Activated B cell treated with CpG ODN at 0.5 μM for 24 hours (primary cell): ENCODE measurements at regions of chr12 and their contacts with region 1.

Region 1: DNA sequence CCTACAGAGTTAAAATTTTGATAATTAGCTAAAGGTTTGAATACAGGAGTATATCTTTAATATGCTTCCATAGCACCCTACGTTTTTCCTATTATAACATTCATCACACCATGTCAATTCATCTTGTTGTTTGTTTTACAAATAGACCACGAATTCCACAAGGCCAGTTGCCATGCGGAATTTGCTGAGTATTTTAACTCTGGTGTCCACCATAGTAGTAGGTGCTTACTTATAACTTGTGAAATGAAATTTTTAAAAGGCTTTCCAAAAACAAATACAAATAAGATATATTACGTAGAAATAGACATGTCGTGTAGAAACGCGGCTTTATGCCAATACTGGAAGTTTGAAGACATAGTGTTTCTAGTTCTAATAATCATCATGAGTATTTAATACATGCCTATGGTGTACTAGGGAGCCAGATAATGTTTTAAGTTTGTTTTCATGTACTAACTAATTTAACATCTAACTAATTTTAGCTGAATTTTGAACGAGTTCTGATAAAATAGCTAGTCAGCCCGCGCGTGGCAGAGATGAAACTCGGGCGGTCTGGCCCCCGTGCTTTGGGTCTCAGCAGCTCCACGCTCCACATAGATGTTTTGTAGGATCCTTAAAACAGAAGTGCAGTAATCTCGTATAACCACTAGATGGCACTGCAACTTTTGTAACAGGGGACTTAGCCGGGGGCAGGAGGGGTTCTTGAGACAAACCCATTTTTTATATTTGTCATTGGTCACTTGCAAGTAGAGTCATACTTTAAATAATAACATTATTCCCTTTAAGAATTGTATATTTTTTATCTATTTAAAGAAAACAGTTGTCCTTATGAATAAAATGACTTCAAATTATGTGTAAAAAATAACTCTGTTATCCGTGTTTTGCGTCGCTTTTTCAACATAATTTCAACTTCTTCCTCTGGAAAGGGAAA is 10.2 kb downstream of the CD69 start:
- DNase-seq: no peak
- ATAC-seq: peak; percentile 85
- H3K4me3 Mint-ChIP-seq: no peak overlapping the region
- H3K27ac Mint-ChIP-seq: peak overlapping the region; percentile 57
- H3K4me1 Mint-ChIP-seq: peaks cover 35% of the 10 kb centered on the region
- H3K27me3 Mint-ChIP-seq: no peaks in the 10 kb centered on the region
- CTCF ChIP-seq: no peak

Region 2: DNA sequence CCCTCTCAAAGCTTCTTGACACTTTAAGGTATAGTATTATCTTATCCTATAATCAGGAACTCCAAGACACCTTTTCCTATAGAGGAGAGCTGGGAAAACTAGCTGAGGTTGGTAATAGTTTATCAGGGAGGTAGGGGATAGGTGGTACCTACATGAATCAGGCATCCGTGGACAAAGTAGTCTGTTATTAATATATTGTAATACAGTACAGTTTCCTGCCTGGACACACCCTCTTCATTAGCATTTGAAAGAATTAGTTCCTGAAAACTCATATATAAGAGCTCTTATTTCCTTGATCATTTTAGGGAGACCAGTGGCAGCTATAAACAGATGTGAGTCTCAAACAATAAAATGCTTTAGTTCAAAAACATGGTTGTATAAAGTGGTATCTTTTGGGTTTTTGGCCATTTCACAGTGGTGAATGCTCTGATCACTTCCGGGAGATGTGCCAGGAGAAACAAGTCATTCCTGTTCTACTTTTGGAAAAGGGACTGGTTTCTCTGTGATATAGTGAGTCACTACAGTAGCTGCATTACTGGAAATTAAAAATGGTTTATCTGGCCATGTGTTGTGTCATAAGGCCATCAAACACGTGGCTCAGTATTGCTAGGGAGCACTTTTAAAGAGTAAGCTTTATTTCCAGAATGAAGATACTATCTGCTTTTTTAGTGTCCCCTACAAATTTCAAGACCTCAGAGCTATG is 240.9 kb before region 1 on chr12:
- CTCF ChIA-PET with region 1: no interaction called
- POLR2A ChIA-PET with region 1: no interaction called
- intact Hi-C with region 1: no loop called
- DNase-seq: no peak
- ATAC-seq: peak; percentile 31
- H3K4me3 Mint-ChIP-seq: no peak overlapping the region
- H3K27ac Mint-ChIP-seq: peak overlapping the region; percentile 80
- H3K4me1 Mint-ChIP-seq: peaks cover 28% of the 10 kb centered on the region
- H3K27me3 Mint-ChIP-seq: no peaks in the 10 kb centered on the region
- CTCF ChIP-seq: no peak

Region 3: DNA sequence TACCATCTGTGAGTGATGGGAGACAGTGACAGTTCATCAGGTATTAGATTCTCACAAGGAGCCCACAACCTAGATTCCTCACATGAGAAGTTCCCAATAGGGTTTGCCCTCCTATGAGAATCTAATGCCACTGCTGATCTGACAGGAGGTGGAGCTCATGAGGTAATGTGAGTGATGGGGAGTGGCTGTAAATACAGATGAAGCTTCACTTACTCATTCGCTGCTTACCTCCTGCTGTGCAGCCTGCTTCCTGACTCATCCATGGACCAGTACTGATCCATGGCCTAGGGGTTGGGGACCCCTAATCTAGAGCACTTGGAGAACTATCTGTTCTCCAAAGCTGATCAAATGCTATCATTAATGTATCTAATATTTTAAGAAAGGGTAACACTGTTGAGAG is 63.3 kb before region 1 on chr12:
- CTCF ChIA-PET with region 1: interaction called, 11 read pairs
- POLR2A ChIA-PET with region 1: no interaction called
- intact Hi-C with region 1: no loop called
- DNase-seq: no peak
- ATAC-seq: peak; percentile 29
- H3K4me3 Mint-ChIP-seq: no peak overlapping the region
- H3K27ac Mint-ChIP-seq: no peak overlapping the region
- H3K4me1 Mint-ChIP-seq: peaks cover 61% of the 10 kb centered on the region
- H3K27me3 Mint-ChIP-seq: no peaks in the 10 kb centered on the region
- CTCF ChIP-seq: no peak

Region 4: DNA sequence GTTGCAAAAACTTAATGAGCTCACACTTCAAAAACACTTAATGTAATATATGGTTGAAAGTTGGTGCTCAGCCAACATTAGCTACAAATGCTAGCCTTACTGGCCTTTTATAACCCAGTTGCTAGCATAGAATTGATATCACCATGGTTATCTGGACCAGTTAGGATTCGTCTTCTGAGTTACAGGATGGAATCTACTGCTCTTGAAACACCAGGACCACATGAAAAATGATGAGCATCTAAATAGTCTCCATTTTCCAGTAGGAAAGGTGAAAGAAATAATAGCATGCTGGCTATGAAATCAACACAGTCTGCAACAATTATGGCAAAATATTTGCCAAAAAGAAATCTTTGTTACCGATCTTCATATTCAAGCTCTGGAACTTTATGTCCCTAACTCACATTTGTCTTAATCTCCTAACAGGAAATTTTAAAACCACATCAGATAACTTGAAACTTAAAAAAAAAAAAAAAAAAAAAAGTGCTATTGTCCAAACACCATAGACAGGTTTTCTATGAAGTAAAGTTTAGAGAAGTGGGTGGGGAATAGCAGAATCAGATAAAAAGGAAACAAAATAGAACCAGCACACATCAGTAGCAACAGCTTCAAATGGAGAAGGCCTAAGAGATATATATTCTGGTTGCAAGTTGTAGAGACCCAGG is 22.8 kb after region 1 on chr12:
- CTCF ChIA-PET with region 1: interaction called, 34 read pairs
- POLR2A ChIA-PET with region 1: no interaction called
- intact Hi-C with region 1: no loop called
- DNase-seq: no peak
- ATAC-seq: no peak
- H3K4me3 Mint-ChIP-seq: no peak overlapping the region
- H3K27ac Mint-ChIP-seq: no peak overlapping the region
- H3K4me1 Mint-ChIP-seq: peaks cover 27% of the 10 kb centered on the region
- H3K27me3 Mint-ChIP-seq: no peaks in the 10 kb centered on the region
- CTCF ChIP-seq: no peak

Region 5: GRCh38 chr12:9925708-9926393 is 175.3 kb after region 1 on chr12:
- CTCF ChIA-PET with region 1: interaction called, 35 read pairs
- POLR2A ChIA-PET with region 1: no interaction called
- intact Hi-C with region 1: loop called (anchors 1 kb)
- DNase-seq: no peak
- ATAC-seq: peak; percentile 40
- H3K4me3 Mint-ChIP-seq: peak overlapping the region; percentile 62
- H3K27ac Mint-ChIP-seq: no peak overlapping the region
- H3K4me1 Mint-ChIP-seq: peaks cover 4% of the 10 kb centered on the region
- H3K27me3 Mint-ChIP-seq: peaks cover 12% of the 10 kb centered on the region
- CTCF ChIP-seq: no peak

Region 6: GRCh38 chr12:10212201-10213131 is 461.9 kb after region 1 on chr12 and contains the start of gene GABARAPL1:
- CTCF ChIA-PET with region 1: no interaction called
- POLR2A ChIA-PET with region 1: no interaction called
- intact Hi-C with region 1: loop called (anchors 5 kb)
- DNase-seq: peak; percentile 59
- ATAC-seq: peak; percentile 74
- H3K4me3 Mint-ChIP-seq: peak within 1 kb of the TSS; percentile 91
- H3K27ac Mint-ChIP-seq: peak within 1 kb of the TSS; percentile 46
- H3K4me1 Mint-ChIP-seq: peaks cover 17% of the 10 kb centered on the region
- H3K27me3 Mint-ChIP-seq: peaks cover 19% of the 10 kb centered on the region
- CTCF ChIP-seq: no peak
- total RNA-seq, gene GABARAPL1: 2.1 and 2.5 TPM in 2 replicates